HepG2 (cell line): ENCODE measurements at regions of chr3 and their contacts with region 1.

Region 1: DNA sequence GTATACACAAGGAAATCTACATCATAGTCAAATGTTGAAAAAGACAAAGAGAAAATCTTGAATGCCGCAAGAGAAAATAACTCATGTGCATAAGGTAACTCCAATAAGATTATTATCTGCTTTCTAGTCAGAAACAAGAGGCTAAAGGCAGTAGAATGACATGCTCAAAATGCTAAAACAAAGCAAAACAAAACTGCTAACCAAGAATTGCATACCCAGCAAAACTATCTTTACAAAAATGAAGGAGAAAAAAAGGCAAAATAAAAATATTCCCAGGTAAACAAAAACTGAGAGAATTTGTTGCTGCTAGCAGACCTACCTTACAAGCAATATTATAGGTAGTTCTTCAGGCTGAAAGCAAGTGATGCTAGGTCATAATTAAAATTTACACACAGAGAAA is 76.4 kb upstream of the TMEM158 start:
- DNase-seq: no peak
- ATAC-seq: no peak
- H3K4me3 ChIP-seq: no peak overlapping the region
- H3K27ac ChIP-seq: no peak overlapping the region
- H3K4me1 ChIP-seq: no peaks in the 10 kb centered on the region
- H3K27me3 ChIP-seq: peaks cover 0 to 3% of the 10 kb centered on the region in 2 experiments; a peak in 1 of 5 replicates
- CTCF ChIP-seq: no peak
- EP300 ChIP-seq: no peak
- POLR2A ChIP-seq: no peak
- RAD21 ChIP-seq: no peak

Region 2: GRCh38 chr3:45371621-45372020 is 69.2 kb after region 1 on chr3:
- CTCF ChIA-PET with region 1: no interaction called
- POLR2A ChIA-PET with region 1: no interaction called
- in situ Hi-C with region 1: no loop called
- intact Hi-C with region 1: loop called (anchors 2 kb)
- DNase-seq: no peak
- ATAC-seq: no peak
- H3K4me3 ChIP-seq: no peak overlapping the region
- H3K27ac ChIP-seq: no peak overlapping the region
- H3K4me1 ChIP-seq: no peaks in the 10 kb centered on the region
- H3K27me3 ChIP-seq: peaks cover 0 to 15% of the 10 kb centered on the region in 2 experiments; a peak in 1 of 5 replicates
- CTCF ChIP-seq: no peak
- EP300 ChIP-seq: no peak
- POLR2A ChIP-seq: no peak
- RAD21 ChIP-seq: no peak